Naive thymus-derived CD4-positive, alpha-beta T cell (primary cell): ENCODE measurements at regions of chr10 and their contacts with region 1.

Region 1: GRCh38 chr10:101818119-101818871 is at the start of gene OGA:
- DNase-seq: peak; percentile 90 to 100 (median 99)
- ATAC-seq: peak; percentile 97
- H3K4me3 ChIP-seq: peak within 1 kb of the TSS; percentile 81
- H3K4me3 Mint-ChIP-seq: peak within 1 kb of the TSS; percentile 95 to 100 (median 97)
- H3K27ac ChIP-seq: peak within 1 kb of the TSS; percentile 82
- H3K27ac Mint-ChIP-seq: peak within 1 kb of the TSS; percentile 95 to 99 (median 98)
- H3K4me1 ChIP-seq: peaks cover 19 to 25% of the 10 kb centered on the region in 2 donors
- H3K4me1 Mint-ChIP-seq: peaks cover 34 to 57% (median 50%) of the 10 kb centered on the region in 7 donors
- H3K27me3 ChIP-seq: no peaks in the 10 kb centered on the region
- H3K27me3 Mint-ChIP-seq: peaks cover 0 to 4% (median 0%) of the 10 kb centered on the region in 5 donors
- total RNA-seq, gene OGA: 154 to 338 (median 321) TPM

Region 2: DNA sequence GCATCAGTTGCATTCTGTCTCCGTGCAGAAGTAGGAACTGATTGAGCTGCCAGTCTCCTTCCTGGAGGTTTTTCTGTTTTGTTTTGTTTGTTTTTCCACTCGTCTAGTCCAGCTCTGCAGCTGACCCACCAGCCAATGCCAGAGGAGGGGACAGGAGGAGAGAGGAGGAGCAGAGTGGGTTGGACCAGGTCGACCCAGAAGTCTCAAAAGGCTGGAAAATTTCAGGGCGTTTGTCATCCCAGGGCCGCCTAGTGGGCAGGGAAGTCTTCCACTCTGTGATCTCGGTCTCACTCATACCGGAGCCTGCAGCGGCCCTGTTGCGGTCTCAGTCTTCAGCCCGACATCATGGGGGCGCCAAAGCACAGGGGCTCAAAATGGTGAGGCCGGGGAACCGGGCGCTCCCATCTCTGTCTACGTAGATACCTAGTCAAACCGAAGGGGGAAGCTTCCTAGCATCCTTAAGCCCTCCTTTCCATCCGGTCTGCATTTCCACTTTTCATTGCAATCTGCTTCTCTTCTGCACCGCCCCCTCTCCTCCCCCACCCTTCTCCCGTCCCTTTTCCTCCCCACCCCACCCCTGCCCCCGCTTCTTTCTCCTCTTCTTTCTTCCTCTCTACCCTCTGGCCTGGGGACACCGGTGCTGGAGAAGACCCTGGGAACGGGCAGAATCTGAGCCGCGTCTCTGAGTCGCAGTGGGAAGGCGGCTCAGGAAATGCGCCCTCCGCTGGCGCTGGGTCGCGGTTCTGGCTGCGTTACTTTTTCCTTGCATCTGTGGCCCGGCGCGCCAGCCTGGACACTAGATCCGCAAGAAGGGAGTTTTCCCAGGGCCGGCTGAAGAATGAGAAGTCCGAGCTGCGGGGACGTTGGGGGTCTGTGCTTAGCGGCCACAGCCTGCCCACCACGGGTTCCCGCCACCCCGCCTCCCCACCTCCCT is 1089.1 kb before region 1 on chr10:
- CTCF ChIA-PET with region 1: no interaction called
- POLR2A ChIA-PET with region 1: no interaction called
- intact Hi-C with region 1: no loop called
- DNase-seq: no peak
- ATAC-seq: no peak
- H3K4me3 ChIP-seq: no peak overlapping the region
- H3K4me3 Mint-ChIP-seq: peak overlapping the region in 9 of 10 donors; percentile 21 to 82 (median 67)
- H3K27ac ChIP-seq: no peak overlapping the region
- H3K27ac Mint-ChIP-seq: no peak overlapping the region
- H3K4me1 ChIP-seq: peaks cover 13 to 18% of the 10 kb centered on the region in 2 donors
- H3K4me1 Mint-ChIP-seq: peaks cover 8 to 26% (median 22%) of the 10 kb centered on the region in 7 donors
- H3K27me3 ChIP-seq: peaks cover 2 to 9% of the 10 kb centered on the region in 2 donors
- H3K27me3 Mint-ChIP-seq: peaks cover 86 to 92% (median 88%) of the 10 kb centered on the region in 5 donors

Region 3: GRCh38 chr10:100912605-100913469 is 905.5 kb before region 1 on chr10 and contains the start of gene SLF2:
- CTCF ChIA-PET with region 1: no interaction called
- POLR2A ChIA-PET with region 1: no interaction called
- intact Hi-C with region 1: loop called in 1 of 2 experiments (anchors 5 kb)
- DNase-seq: peak; percentile 69 to 91 (median 88)
- ATAC-seq: peak; percentile 96
- H3K4me3 ChIP-seq: peak within 1 kb of the TSS; percentile 96
- H3K4me3 Mint-ChIP-seq: peak within 1 kb of the TSS; percentile 91 to 100 (median 99)
- H3K27ac ChIP-seq: peak within 1 kb of the TSS; percentile 89
- H3K27ac Mint-ChIP-seq: peak within 1 kb of the TSS; percentile 88 to 99 (median 97)
- H3K4me1 ChIP-seq: peaks cover 12 to 13% of the 10 kb centered on the region in 2 donors
- H3K4me1 Mint-ChIP-seq: peaks cover 22 to 63% (median 60%) of the 10 kb centered on the region in 7 donors
- H3K27me3 ChIP-seq: no peaks in the 10 kb centered on the region
- H3K27me3 Mint-ChIP-seq: no peaks in the 10 kb centered on the region
- total RNA-seq, gene SLF2: 20.1 to 43.7 (median 38.8) TPM

Region 4: GRCh38 chr10:101745074-101745696 is 73.1 kb before region 1 on chr10:
- CTCF ChIA-PET with region 1: no interaction called
- POLR2A ChIA-PET with region 1: no interaction called
- intact Hi-C with region 1: no loop called
- DNase-seq: no peak
- ATAC-seq: no peak
- H3K4me3 ChIP-seq: no peak overlapping the region
- H3K4me3 Mint-ChIP-seq: no peak overlapping the region
- H3K27ac ChIP-seq: no peak overlapping the region
- H3K27ac Mint-ChIP-seq: no peak overlapping the region
- H3K4me1 ChIP-seq: no peaks in the 10 kb centered on the region
- H3K4me1 Mint-ChIP-seq: no peaks in the 10 kb centered on the region
- H3K27me3 ChIP-seq: no peaks in the 10 kb centered on the region
- H3K27me3 Mint-ChIP-seq: peaks cover 0 to 33% (median 3%) of the 10 kb centered on the region in 5 donors

Region 5: GRCh38 chr10:101782811-101783735 is 35.2 kb before region 1 on chr10 and contains the start of gene NPM3:
- CTCF ChIA-PET with region 1: interaction called, 8 read pairs
- POLR2A ChIA-PET with region 1: interaction called, 31 read pairs
- intact Hi-C with region 1: loop called (anchors 1 kb)
- DNase-seq: peak in 8 of 9 donors; percentile 68 to 84 (median 77)
- ATAC-seq: peak; percentile 82
- H3K4me3 ChIP-seq: peak within 1 kb of the TSS; percentile 68
- H3K4me3 Mint-ChIP-seq: peak within 1 kb of the TSS; percentile 92 to 100 (median 99)
- H3K27ac ChIP-seq: peak within 1 kb of the TSS; percentile 81
- H3K27ac Mint-ChIP-seq: peak within 1 kb of the TSS; percentile 65 to 98 (median 96)
- H3K4me1 ChIP-seq: peaks cover 32 to 49% of the 10 kb centered on the region in 2 donors
- H3K4me1 Mint-ChIP-seq: peaks cover 36 to 76% (median 61%) of the 10 kb centered on the region in 7 donors
- H3K27me3 ChIP-seq: peaks cover 0 to 11% of the 10 kb centered on the region in 2 donors
- H3K27me3 Mint-ChIP-seq: peaks cover 8 to 17% (median 10%) of the 10 kb centered on the region in 5 donors
- total RNA-seq, gene NPM3: 10.9 to 31.3 (median 16.2) TPM

Region 6: DNA sequence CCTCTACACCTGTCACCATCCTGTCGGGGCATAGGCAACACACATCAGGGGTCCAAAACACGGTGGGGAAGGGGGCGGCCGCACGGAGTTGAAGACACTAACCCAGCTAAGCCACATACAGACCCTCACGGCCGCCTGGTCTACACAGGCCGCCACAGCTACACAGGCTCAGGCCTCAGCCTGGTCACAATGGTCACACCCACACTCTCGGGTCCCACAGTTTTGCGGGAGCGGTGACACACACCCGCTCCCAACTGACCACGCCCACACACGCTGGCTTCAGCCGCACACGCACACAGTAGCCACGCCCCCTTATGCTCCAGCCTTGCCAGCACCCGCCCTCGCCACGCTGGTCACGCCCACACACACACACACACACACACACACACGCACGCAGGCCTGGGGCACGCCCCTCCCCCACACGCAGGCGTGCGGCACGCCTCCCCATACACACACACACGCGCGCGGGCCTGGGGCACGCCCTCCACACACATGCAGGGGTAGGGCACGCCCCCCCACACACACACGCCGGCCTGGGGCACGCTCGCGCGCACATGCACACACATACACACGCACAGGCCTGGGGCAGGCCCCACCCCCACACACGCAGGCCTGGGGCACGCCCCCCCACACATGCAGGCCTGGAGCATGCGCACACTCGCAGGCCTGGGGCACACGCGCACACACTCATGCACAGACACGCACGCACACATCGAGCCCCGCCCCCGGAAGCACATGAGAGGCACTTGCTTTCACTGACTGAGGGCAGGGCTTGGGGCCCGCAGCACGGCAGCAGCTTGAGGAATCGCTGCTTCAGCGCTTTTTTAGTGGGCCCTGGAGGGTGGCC is 12.2 kb after region 1 on chr10:
- CTCF ChIA-PET with region 1: interaction called, 8 read pairs
- POLR2A ChIA-PET with region 1: interaction called, 71 read pairs
- intact Hi-C with region 1: loop called (anchors 1 kb)
- DNase-seq: peak; percentile 89 to 98 (median 95)
- ATAC-seq: peak; percentile 90
- H3K4me3 ChIP-seq: peak overlapping the region; percentile 66
- H3K4me3 Mint-ChIP-seq: peak overlapping the region; percentile 79 to 94 (median 88)
- H3K27ac ChIP-seq: peak overlapping the region; percentile 85
- H3K27ac Mint-ChIP-seq: peak overlapping the region; percentile 94 to 100 (median 99)
- H3K4me1 ChIP-seq: peaks cover 22 to 53% of the 10 kb centered on the region in 2 donors
- H3K4me1 Mint-ChIP-seq: peaks cover 41 to 59% (median 53%) of the 10 kb centered on the region in 7 donors
- H3K27me3 ChIP-seq: no peaks in the 10 kb centered on the region
- H3K27me3 Mint-ChIP-seq: peaks cover 0 to 4% (median 0%) of the 10 kb centered on the region in 5 donors

Region 7: DNA sequence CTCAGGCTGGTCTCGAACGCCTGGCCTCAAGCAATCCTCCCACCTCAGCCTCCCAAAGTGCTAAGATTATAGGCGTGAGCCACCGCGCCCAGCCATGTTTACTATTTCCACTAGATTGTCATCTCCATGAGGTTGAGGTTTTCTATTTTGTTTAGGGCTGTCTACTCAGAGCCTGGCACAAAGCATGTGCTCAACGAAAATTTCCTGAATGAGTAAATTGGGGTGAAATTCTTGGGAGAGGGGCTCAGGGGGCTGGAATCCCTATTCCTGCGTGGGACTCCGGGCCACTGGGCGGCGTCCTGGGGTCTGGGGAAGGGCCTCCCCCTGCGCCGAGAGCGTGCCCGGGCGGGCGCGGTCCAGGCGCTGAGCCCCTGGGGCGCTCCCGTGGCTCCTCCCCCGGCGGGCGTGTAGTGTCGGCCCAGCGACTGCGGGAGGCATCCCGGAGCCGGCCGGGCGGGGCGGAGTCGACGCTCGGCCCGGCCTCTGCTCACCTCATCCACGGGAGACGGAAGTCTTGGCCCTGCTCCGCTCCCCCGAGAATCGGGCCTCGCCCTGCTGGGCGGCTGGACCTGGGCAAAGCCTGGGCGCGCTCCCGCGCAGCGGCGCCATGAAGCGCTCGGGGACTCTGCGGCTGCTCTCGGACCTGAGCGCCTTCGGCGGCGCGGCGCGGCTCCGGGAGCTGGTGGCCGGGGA is 246.7 kb after region 1 on chr10 and contains the start of gene HPS6:
- CTCF ChIA-PET with region 1: no interaction called
- POLR2A ChIA-PET with region 1: interaction called, 3 read pairs
- intact Hi-C with region 1: loop called in 1 of 2 experiments (anchors 2 kb)
- DNase-seq: peak; percentile 73 to 94 (median 81)
- ATAC-seq: peak; percentile 98
- H3K4me3 ChIP-seq: peak within 1 kb of the TSS; percentile 82
- H3K4me3 Mint-ChIP-seq: peak within 1 kb of the TSS; percentile 79 to 91 (median 89)
- H3K27ac ChIP-seq: peak within 1 kb of the TSS; percentile 93
- H3K27ac Mint-ChIP-seq: peak within 1 kb of the TSS; percentile 85 to 97 (median 93)
- H3K4me1 ChIP-seq: peaks cover 14 to 23% of the 10 kb centered on the region in 2 donors
- H3K4me1 Mint-ChIP-seq: peaks cover 23 to 43% (median 36%) of the 10 kb centered on the region in 7 donors
- H3K27me3 ChIP-seq: no peaks in the 10 kb centered on the region
- H3K27me3 Mint-ChIP-seq: no peaks in the 10 kb centered on the region
- total RNA-seq, gene HPS6: 12.1 to 24.2 (median 20.9) TPM

Region 8: DNA sequence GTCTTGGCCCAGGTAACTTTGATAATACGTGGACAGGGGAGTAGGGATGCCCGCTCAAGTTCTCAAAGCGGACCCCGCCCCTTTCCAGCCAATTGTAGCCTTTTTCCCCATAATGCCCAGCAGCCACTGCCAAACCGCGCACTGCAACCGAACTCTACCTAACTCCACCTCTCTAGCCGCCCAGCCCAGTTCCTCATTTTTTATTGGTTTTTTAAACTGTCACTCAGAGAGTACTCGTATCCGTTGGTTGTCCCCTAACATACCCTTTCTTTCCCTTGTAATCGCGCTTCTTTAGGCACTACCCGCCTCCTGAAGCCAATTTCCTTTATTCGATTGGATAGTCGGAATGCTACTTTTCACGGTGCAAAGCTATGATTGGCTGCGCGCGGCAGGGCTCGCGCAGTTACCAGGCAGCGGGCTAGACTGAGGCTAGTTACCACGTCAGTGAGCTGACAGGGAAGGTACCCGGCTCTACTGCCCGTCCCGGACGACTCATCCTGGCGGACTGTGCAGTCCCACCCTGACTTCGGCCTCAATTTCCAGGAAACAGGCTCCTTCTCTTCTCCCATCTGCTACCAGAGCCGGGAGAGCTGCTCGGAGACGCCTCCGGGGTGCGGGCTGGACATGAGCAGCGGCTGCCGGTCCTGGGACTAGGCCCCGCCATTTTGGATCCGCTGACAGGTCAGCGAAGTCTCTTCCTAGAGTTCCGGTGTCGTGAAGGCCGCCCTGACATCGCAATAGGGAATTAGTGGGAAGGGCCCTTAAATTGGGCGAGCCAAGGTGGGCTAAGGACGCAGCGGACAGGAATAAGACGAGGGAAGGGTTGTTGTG is 427.0 kb after region 1 on chr10 and contains the start of gene GBF1:
- CTCF ChIA-PET with region 1: no interaction called
- POLR2A ChIA-PET with region 1: no interaction called
- intact Hi-C with region 1: loop called in 1 of 2 experiments (anchors 1 kb)
- DNase-seq: peak; percentile 69 to 97 (median 96)
- ATAC-seq: peak; percentile 92
- H3K4me3 ChIP-seq: peak within 1 kb of the TSS; percentile 84
- H3K4me3 Mint-ChIP-seq: peak within 1 kb of the TSS; percentile 83 to 100 (median 97)
- H3K27ac ChIP-seq: peak within 1 kb of the TSS; percentile 90
- H3K27ac Mint-ChIP-seq: peak within 1 kb of the TSS; percentile 65 to 98 (median 95)
- H3K4me1 ChIP-seq: peaks cover 17 to 37% of the 10 kb centered on the region in 2 donors
- H3K4me1 Mint-ChIP-seq: peaks cover 43 to 69% (median 54%) of the 10 kb centered on the region in 7 donors
- H3K27me3 ChIP-seq: peaks cover 0 to 16% of the 10 kb centered on the region in 2 donors
- H3K27me3 Mint-ChIP-seq: peaks cover 14 to 27% (median 22%) of the 10 kb centered on the region in 5 donors
- total RNA-seq, gene GBF1: 36.2 to 47.2 (median 37.8) TPM

Region 9: DNA sequence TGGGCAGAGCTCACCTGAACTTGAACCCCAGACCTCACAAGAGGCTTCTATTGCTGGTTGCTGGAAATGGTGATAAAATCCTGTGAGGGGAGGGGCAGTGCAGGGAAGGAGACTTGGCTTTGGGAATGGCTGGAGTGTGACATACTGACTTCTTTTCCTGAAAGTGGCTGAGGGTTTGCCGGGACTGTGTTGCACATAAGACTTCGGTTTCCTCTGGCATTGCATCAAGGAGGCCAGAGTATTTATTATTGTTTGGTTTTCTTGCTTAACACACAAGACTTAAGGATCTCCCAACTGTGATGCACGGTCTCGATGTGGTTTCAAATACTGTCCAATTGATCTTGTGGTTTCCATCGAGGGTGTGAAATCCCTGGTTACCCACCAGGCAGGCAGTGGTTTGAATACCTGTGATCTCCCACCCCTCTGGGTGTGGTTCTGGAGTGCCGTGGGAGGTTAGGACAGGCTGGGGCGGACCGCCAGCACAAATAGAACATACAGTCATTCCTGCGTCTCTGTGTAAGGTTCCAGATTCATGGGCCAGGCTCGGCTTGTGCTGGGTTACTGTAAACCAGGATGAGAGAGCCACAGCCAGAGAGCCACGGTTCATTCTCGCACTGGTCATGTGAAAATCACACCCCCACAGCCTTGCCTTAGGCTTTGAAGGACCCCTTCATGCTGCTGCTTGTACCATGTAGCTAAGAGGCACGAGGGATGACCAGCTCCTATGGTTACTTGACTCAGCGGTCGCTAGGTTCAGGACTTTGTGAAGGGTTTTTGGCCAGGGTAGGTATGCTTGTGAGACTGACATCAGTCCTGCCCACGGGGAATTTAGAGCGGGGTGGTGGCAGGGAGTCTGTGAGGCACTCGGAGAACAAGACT is 964.6 kb after region 1 on chr10:
- CTCF ChIA-PET with region 1: no interaction called
- POLR2A ChIA-PET with region 1: no interaction called
- intact Hi-C with region 1: no loop called
- DNase-seq: no peak
- ATAC-seq: no peak
- H3K4me3 ChIP-seq: no peak overlapping the region
- H3K4me3 Mint-ChIP-seq: no peak overlapping the region
- H3K27ac ChIP-seq: no peak overlapping the region
- H3K27ac Mint-ChIP-seq: peak overlapping the region in 5 of 9 donors; percentile 22 to 43 (median 34)
- H3K4me1 ChIP-seq: peaks cover 0 to 7% of the 10 kb centered on the region in 2 donors
- H3K4me1 Mint-ChIP-seq: peaks cover 28 to 74% (median 70%) of the 10 kb centered on the region in 7 donors
- H3K27me3 ChIP-seq: no peaks in the 10 kb centered on the region
- H3K27me3 Mint-ChIP-seq: no peaks in the 10 kb centered on the region